ENCODE measurements at regions of chr20 and their contacts with region 1.

Region 1: DNA sequence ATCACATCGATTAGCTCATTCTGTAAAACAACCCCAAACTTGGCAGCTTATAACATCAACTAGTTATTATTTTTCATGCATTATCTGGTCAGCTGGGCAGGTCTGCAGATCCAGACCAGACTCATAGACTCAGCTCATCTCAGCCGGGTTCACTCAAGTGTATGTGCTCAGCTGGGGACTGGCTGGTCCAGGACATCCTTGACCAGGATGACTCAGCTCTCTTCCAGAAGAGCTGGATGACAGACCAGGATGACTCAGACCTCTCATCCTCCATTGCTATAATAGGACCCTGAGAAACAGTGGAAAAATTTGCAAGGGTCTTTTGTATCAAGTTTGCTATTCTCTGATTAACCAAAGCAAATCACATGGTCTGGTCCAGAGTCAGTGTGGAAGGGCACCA is 312.5 kb upstream of the PLCB4 start:
- DNase-seq: peak; percentile 87 to 93
- ATAC-seq: peak; percentile 96
- H3K4me3 ChIP-seq: no peak overlapping the region
- H3K27ac ChIP-seq: peak overlapping the region; percentile 65 to 78
- H3K4me1 ChIP-seq: peaks cover 21% of the 10 kb centered on the region
- CTCF ChIP-seq: no peak
- EP300 ChIP-seq: 0 out of 5 replicates have a peak, but pooled peaks of 1 of the 2 experiments have one; percentile 9
- POLR2A ChIP-seq: no peak
- RAD21 ChIP-seq: no peak

Region 2: GRCh38 chr20:8735674-8736073 is 20.7 kb before region 1 on chr20:
- CTCF ChIA-PET with region 1: interaction called, 12 read pairs
- POLR2A ChIA-PET with region 1: no interaction called
- DNase-seq: no peak
- ATAC-seq: no peak
- H3K4me3 ChIP-seq: no peak overlapping the region
- H3K27ac ChIP-seq: no peak overlapping the region
- H3K4me1 ChIP-seq: no peaks in the 10 kb centered on the region
- CTCF ChIP-seq: no peak
- EP300 ChIP-seq: no peak
- POLR2A ChIP-seq: no peak
- RAD21 ChIP-seq: no peak

Region 3: DNA sequence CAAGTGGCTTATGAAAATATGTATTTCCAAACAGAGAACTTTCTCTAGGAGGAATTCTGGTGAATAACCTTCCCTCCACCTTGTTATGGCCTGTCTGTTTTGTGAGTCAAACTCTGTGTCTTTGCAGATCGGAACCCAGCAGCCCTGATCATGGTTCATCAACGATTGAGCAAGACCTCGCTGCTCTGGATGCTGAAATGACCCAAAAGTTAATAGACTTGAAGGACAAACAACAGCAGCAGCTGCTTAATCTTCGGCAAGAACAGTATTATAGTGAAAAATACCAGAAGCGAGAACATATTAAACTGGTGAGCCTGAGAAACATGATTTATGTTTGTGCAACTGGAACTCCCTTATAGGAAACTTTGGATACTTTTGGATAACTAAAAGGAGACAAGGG is 18.0 kb after region 1 on chr20:
- CTCF ChIA-PET with region 1: interaction called, 20 read pairs
- POLR2A ChIA-PET with region 1: interaction called, 9 read pairs
- DNase-seq: no peak
- ATAC-seq: no peak
- H3K4me3 ChIP-seq: no peak overlapping the region
- H3K27ac ChIP-seq: no peak overlapping the region
- H3K4me1 ChIP-seq: no peaks in the 10 kb centered on the region
- CTCF ChIP-seq: no peak
- EP300 ChIP-seq: no peak
- POLR2A ChIP-seq: no peak
- RAD21 ChIP-seq: no peak

Region 4: DNA sequence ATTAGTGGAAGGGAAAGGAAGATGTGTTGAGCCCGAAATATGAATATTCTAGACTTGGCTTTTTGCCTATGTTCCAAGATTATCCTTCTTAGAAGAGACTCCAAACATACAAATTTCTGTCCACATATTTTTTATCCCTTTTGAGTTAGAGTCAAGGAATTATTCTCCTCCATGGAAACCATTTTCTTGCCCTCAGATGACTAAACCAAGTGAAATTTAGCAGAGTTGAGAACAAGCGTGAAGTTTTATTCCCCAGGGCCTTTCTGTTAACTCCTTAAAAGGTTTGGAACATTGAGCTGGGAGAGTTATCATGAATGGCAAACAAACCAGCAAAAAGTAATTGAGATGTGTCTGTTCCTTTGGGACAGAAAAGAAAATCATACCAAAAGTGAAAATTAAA is 26.4 kb after region 1 on chr20:
- CTCF ChIA-PET with region 1: interaction called, 11 read pairs
- POLR2A ChIA-PET with region 1: no interaction called
- DNase-seq: no peak
- ATAC-seq: no peak
- H3K4me3 ChIP-seq: no peak overlapping the region
- H3K27ac ChIP-seq: no peak overlapping the region
- H3K4me1 ChIP-seq: no peaks in the 10 kb centered on the region
- CTCF ChIP-seq: no peak
- EP300 ChIP-seq: no peak
- POLR2A ChIP-seq: no peak
- RAD21 ChIP-seq: no peak

Region 5: DNA sequence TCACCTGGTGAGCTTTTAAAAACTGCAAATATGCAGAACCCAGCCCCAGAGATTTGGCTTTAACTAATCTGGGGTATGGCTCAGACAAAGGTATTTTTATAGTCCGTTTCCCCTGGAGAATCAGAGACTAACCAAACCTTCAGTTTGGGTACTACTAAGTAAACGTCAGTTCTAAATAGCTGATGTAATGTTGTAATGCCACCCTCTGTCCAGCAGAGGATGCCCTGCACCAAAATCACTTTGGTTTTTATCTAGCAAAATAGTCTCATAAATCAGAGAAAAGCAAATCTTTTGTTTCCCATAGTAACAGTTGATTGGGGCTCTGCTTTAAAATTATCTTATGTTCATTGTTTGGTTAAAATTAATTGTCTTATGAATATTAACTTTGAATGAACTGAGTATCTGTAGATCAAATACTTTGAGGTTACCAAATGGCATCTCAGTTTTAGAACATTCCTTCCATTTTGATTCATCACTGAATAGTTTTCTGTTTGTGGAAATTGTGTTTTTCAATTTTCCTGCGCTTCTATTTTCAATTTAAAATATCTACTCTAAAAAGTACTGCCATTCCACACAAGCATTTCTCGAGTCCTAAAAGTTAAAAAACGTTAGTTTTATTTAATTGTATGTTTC is 34.1 kb after region 1 on chr20:
- CTCF ChIA-PET with region 1: interaction called, 12 read pairs
- POLR2A ChIA-PET with region 1: no interaction called
- DNase-seq: peak; percentile 15 to 63
- ATAC-seq: peak; percentile 69 to 75; a peak in 5 of 6 replicates
- H3K4me3 ChIP-seq: no peak overlapping the region
- H3K27ac ChIP-seq: peak overlapping the region in 1 of 2 experiments; percentile 44; a peak in 1 of 6 replicates
- H3K4me1 ChIP-seq: no peaks in the 10 kb centered on the region
- CTCF ChIP-seq: peak; percentile 99
- EP300 ChIP-seq: no peak
- POLR2A ChIP-seq: no peak
- RAD21 ChIP-seq: peak; percentile 95 to 98

Region 6: DNA sequence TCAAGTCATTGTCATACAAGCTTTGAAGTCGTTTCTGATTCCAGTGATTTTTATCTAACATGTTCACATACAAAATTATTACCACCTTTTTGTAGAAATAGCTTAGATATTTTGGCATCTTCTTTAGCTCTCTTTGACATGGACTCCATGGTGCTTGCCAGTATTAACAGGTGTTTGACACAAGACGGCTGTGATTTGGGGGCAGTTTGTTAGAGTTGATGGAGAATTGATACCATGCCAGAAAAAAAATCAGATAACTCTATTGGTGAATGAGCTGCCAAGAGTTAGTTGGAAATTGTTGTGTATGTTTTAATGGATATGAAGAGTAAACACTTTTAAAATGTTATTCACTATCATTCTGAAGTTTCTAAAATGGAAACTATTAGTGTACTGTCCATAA is 611.3 kb after region 1 on chr20:
- CTCF ChIA-PET with region 1: interaction called, 10 read pairs
- POLR2A ChIA-PET with region 1: no interaction called
- DNase-seq: no peak
- ATAC-seq: no peak
- H3K4me3 ChIP-seq: no peak overlapping the region
- H3K27ac ChIP-seq: no peak overlapping the region
- H3K4me1 ChIP-seq: no peaks in the 10 kb centered on the region
- CTCF ChIP-seq: no peak
- EP300 ChIP-seq: no peak
- POLR2A ChIP-seq: no peak
- RAD21 ChIP-seq: no peak

Region 7: GRCh38 chr20:9392892-9393857 is 636.8 kb after region 1 on chr20:
- CTCF ChIA-PET with region 1: interaction called, 37 read pairs
- POLR2A ChIA-PET with region 1: no interaction called
- DNase-seq: peak; percentile 62 to 73
- ATAC-seq: peak; percentile 96 to 98
- H3K4me3 ChIP-seq: no peak overlapping the region
- H3K27ac ChIP-seq: 0 out of 6 replicates have a peak overlapping the region, but pooled peaks of 1 of the 2 experiments have one; percentile 26
- H3K4me1 ChIP-seq: 0 out of 3 replicates have a peak, but pooled peaks cover 4% of the 10 kb centered on the region
- CTCF ChIP-seq: peak; percentile 86
- EP300 ChIP-seq: no peak
- POLR2A ChIP-seq: no peak
- RAD21 ChIP-seq: peak; percentile 85 to 91